ENCODE measurements at regions of chr5 and their contacts with region 1.

Region 1: DNA sequence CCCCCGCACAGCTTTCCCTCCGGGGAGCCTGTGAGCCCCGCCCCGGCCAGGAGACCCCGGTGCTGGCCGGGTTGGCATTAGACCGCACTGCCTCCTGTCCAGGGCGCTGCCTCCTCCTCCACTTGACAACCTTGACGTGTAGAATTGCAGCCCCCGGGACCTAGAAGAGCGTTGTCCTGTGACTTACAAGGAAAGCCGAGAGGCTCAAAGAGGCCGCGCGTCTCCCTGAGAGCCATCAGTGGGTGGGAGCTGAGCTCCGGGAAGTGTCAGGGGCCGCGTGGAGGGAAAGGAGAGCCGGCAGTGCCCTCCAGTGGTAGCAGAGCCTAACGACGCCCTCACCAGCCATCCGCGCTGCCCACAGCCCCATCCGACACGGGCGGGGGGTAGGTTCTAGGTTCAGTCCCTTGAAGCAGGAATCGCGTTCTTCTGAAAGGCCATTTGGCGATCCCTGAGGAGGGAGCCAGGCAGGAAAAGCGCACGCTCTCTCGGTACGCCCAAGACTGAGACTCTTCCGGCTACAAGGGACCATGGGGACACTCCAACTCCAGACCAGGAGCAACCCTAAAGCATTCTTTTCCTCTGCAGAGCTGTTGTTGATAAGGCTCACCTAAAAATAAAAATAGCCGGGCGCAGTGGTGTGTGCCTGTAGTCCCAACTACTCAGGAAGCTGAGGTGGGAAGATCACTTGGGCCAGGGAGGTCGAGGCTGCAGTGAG is 40.6 kb upstream of the SAP30L start:
- DNase-seq: peak; percentile 91
- H3K4me3 Mint-ChIP-seq: peak overlapping the region; percentile 63
- H3K27ac Mint-ChIP-seq: peak overlapping the region; percentile 59
- H3K4me1 Mint-ChIP-seq: peaks cover 7% of the 10 kb centered on the region
- H3K27me3 Mint-ChIP-seq: no peaks in the 10 kb centered on the region

Region 2: DNA sequence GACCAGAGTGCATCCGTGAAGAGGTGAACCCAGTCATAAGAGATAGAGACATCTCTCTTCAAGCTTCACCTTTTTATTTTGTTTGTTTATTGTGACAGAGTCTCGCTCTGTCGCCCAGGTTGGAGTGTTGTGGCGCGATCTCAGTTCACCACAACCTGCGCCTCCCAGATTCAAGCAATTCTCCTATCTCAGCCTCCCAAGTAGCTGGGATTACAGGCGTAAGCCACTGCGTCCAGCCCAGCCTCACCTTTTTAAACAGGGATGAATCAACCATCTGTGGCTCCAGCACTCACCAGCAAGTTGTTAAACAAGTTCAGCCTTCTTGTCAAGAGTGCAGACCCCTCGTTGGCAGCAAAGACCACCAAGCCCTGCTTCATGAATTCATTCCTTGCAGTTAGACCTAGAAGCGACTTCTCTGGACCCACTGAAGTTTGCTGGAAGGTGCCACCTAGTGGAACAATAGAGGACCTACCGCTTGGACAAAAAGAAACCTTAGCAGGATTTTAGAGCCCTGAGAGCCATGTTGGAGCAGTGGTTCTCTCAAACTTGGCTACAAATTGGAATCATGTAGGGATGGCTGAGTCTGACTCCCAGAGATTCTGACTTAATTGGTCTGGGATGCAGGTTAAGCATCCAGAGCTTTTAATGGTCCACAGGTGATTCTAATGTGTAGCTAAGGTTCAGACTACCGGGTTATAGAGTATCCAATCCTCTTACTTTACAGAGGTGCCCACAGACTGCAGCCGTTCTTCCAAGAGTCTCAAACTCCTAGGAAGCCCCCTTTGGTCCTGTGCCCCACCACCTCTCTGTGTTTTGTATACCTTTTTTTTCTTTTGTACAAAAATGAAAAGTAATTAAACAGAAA is 225.2 kb before region 1 on chr5:
- intact Hi-C with region 1: loop called (anchors 1 kb)
- DNase-seq: peak; percentile 83
- H3K4me3 Mint-ChIP-seq: no peak overlapping the region
- H3K27ac Mint-ChIP-seq: no peak overlapping the region
- H3K4me1 Mint-ChIP-seq: peaks cover 18% of the 10 kb centered on the region
- H3K27me3 Mint-ChIP-seq: peaks cover 10% of the 10 kb centered on the region

Region 3: DNA sequence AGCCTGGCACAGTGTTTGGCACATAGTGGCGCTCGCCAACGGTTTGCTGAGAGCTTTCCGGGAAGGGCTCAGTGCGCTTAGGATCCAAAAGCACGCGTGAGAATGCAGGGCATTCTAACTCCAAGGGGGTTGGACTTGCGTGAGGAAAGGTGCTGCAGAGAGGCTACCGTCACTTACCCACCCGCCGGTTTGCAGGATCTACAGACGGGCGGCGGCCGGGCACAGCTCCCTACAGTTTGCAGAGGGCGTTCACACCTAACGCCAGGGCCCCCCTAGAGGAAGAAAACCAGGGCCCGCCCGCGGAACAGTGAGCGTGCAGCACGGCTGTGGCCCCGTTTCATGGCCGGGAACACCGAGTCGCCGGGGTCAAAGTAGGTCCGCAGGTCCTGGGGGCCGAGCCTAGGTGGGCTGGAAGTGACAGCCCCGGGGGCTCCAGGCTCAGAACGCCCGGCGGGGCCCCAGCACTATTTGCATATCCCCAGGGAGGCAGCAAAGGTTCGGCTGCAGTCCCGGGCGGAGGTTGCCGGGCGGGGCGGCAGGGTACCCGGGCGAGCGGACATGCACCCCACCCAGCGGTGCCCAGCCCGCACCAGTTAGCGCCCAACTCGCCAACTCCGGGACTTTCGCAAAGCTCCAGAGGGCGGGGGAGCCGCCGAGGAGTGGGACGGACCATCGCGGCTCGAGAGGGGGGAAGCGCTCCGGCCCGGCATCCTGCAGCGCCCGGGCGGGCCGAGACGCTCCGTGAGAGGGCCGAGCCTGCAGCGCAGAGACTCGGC is 215.2 kb before region 1 on chr5:
- intact Hi-C with region 1: loop called (anchors 2 kb)
- DNase-seq: peak; percentile 95
- H3K4me3 Mint-ChIP-seq: peak overlapping the region; percentile 89
- H3K27ac Mint-ChIP-seq: peak overlapping the region; percentile 77
- H3K4me1 Mint-ChIP-seq: peaks cover 41% of the 10 kb centered on the region
- H3K27me3 Mint-ChIP-seq: peaks cover 5% of the 10 kb centered on the region

Measured in activated CD4-positive, alpha-beta T cell treated with anti-CD3 and anti-CD28 coated beads, Interleukin-2, amount 10 ng/mL, durations not matched to agents 24 days and 14 days (primary cell).